ENCODE measurements at regions of chr10 and their contacts with region 1.

Region 1: DNA sequence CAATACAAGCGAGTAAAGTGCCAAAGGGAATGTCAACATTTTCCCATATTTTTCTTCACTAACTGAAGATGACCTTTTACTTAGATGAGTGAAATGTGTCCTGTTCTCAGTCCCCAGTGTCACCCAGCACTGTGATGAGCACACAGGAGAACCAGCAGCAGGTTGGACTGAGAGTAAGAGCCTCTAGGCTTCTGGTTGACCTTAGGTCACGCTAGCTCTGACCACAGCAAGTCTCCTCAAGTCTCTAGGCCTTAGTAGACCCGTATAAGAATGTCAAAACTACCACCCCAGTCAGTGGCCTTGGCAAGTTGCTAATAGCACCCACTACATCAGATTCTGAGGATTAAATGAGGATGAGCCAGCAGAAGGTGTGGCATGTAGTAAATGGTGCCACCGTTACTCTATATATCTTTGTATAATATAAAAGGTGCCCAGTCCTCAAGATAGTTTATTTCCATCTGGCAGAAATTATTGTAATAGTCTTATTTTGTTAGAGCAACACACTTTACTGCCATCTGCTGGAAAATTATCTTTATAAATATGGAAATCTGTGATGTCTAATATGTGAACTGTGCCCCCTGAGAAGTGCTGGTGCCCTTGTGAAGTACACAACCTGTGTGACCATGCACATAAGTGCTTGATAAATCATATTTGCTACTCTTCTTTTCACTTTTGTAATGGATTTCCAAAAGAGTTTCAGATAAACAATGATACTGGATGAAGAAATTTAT is 75.7 kb downstream of the SPAG6 start:
- DNase-seq: peak; percentile 57
- ATAC-seq: peak; percentile 60
- H3K4me3 ChIP-seq: no peak overlapping the region
- H3K27ac ChIP-seq: no peak overlapping the region
- H3K4me1 ChIP-seq: no peaks in the 10 kb centered on the region; the same call in 1 of the 2 replicates
- H3K27me3 ChIP-seq: no peaks in the 10 kb centered on the region
- CTCF ChIP-seq: peak; percentile 55

Region 2: DNA sequence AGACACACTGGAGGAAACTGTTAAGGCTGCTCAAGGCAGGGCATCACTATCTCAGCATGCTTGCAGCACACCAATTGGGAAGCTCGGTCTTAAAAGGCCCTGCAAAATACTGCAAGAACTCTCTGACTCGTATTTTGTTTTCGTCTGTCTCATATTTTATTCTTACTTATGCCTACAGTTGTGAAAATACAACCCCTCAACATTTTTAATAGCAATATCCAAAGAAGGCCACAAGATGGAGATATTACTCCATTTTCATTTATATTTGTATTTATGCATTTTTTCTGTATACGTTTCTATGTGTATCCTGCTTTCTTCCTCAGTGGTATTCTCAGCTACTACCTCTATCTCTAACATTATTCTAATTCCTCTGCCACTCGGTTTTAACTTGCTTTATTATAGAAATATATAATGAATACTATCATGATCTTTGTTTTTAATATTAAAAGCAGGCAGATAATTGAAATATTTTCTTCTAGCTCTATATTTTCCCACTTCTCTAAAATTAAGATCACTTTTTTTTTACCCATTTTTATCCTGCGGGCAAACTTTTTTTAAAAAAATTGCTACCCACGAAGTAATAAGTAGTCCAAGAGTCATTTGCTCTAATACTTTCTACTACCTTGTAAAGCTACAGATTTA is 427.5 kb before region 1 on chr10:
- CTCF ChIA-PET with region 1: no interaction called
- POLR2A ChIA-PET with region 1: no interaction called
- intact Hi-C with region 1: loop called (anchors 2 kb)
- DNase-seq: peak; percentile 61
- ATAC-seq: no peak
- H3K4me3 ChIP-seq: no peak overlapping the region
- H3K27ac ChIP-seq: peak overlapping the region; percentile 0; the same call in 1 of the 2 replicates
- H3K4me1 ChIP-seq: peaks cover 17% of the 10 kb centered on the region; the same call in 1 of the 2 replicates
- H3K27me3 ChIP-seq: no peaks in the 10 kb centered on the region
- CTCF ChIP-seq: peak; percentile 63

Region 3: GRCh38 chr10:22259280-22259679 is 161.7 kb before region 1 on chr10:
- CTCF ChIA-PET with region 1: no interaction called
- POLR2A ChIA-PET with region 1: no interaction called
- intact Hi-C with region 1: loop called (anchors 2 kb)
- DNase-seq: peak; percentile 11
- ATAC-seq: peak; percentile 42
- H3K4me3 ChIP-seq: no peak overlapping the region
- H3K27ac ChIP-seq: no peak overlapping the region
- H3K4me1 ChIP-seq: no peaks in the 10 kb centered on the region; the same call in 1 of the 2 replicates
- H3K27me3 ChIP-seq: no peaks in the 10 kb centered on the region
- CTCF ChIP-seq: 0 out of 2 replicates have a peak, but pooled peaks have one; percentile 9

Measured in PC-3 (cell line).